ENCODE measurements at regions of chr19 and their contacts with region 1.

Region 1: GRCh38 chr19:17125715-17126677 is 50.4 kb downstream of the MYO9B start:
- DNase-seq: peak; percentile 77
- H3K4me3 Mint-ChIP-seq: peak overlapping the region; percentile 83
- H3K27ac Mint-ChIP-seq: peak overlapping the region; percentile 99
- H3K4me1 Mint-ChIP-seq: peaks cover 37% of the 10 kb centered on the region
- H3K27me3 Mint-ChIP-seq: no peaks in the 10 kb centered on the region

Region 2: GRCh38 chr19:17075035-17075863 is 50.7 kb before region 1 on chr19 and contains the starts of genes HAUS8 and MYO9B:
- intact Hi-C with region 1: loop called (anchors 1 kb)
- DNase-seq: peak; percentile 100
- H3K4me3 Mint-ChIP-seq: peak within 1 kb of the TSS; percentile 99
- H3K27ac Mint-ChIP-seq: peak within 1 kb of the TSS; percentile 97
- H3K4me1 Mint-ChIP-seq: peaks cover 52% of the 10 kb centered on the region
- H3K27me3 Mint-ChIP-seq: no peaks in the 10 kb centered on the region
- total RNA-seq, gene HAUS8: 27.8 and 28.8 TPM in 2 replicates
- total RNA-seq, gene MYO9B: 143 TPM in 2 replicates

Region 3: GRCh38 chr19:17215125-17215971 is 89.4 kb after region 1 on chr19 and contains the start of gene USE1:
- intact Hi-C with region 1: loop called (anchors 1 kb)
- DNase-seq: peak; percentile 84
- H3K4me3 Mint-ChIP-seq: peak within 1 kb of the TSS; percentile 84
- H3K27ac Mint-ChIP-seq: peak within 1 kb of the TSS; percentile 96
- H3K4me1 Mint-ChIP-seq: peaks cover 5% of the 10 kb centered on the region
- H3K27me3 Mint-ChIP-seq: no peaks in the 10 kb centered on the region
- total RNA-seq, gene USE1: 26.4 and 27.2 TPM in 2 replicates

Measured in activated T-helper 2 cell treated with anti-CD3 and anti-CD28 coated beads, Interferon-gamma antibody, Interleukin-2, Interleukin-4, amounts not matched to agents 10 μg/mL and 5 μg/mL and 100 μg/mL, durations not matched to agents 14 hours and 24 hours and 36 hours (primary cell).